Caco-2 (cell line): ENCODE measurements at regions of chr14 and their contacts with region 1.

Region 1: DNA sequence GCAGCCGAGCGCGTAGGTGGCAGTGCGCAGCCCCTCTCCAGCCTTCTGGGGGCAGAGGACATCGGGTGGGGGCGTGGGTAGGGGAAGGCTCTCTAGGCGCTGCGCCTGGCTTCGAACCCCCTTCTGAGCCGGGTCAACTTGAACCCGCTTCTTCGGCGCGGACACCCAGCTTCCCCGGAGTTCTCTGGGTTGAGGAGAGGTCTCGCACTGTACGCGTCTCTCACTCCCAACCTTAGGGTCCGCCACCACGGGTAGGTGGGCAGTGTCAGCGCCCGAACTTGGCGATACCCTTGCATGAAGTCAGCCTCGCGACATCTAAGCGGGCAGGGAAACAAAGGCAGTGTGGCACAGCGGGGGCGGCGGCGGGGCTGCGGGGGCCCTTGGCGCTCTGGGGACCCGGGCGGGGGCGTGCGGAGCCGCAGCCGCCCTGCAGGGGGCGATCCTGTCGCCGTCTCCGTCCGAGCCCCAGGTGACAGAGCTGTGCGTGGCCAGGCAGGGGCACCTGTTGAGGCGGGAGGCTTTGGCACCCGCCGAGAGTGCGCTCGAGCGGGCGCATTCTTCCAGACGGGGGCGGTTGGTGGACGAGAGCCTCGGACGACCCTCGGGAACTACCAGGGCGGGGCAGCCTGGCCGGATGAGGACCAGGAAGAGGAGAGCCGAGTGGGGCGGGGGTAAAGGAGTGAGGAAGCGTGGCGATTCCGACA is 1.1 kb downstream of the GALNT16 start:
- DNase-seq: peak; percentile 56 to 77
- H3K4me3 ChIP-seq: peak overlapping the region; percentile 81
- H3K4me3 Mint-ChIP-seq: peak overlapping the region; percentile 83
- H3K27ac Mint-ChIP-seq: peak overlapping the region; percentile 13
- H3K4me1 ChIP-seq: peaks cover 8% of the 10 kb centered on the region
- H3K4me1 Mint-ChIP-seq: peaks cover 11% of the 10 kb centered on the region
- H3K27me3 ChIP-seq: no peaks in the 10 kb centered on the region; the same call in 1 of the 2 replicates
- H3K27me3 Mint-ChIP-seq: peaks cover 3% of the 10 kb centered on the region
- CTCF ChIP-seq: peak; percentile 67 to 92

Region 2: DNA sequence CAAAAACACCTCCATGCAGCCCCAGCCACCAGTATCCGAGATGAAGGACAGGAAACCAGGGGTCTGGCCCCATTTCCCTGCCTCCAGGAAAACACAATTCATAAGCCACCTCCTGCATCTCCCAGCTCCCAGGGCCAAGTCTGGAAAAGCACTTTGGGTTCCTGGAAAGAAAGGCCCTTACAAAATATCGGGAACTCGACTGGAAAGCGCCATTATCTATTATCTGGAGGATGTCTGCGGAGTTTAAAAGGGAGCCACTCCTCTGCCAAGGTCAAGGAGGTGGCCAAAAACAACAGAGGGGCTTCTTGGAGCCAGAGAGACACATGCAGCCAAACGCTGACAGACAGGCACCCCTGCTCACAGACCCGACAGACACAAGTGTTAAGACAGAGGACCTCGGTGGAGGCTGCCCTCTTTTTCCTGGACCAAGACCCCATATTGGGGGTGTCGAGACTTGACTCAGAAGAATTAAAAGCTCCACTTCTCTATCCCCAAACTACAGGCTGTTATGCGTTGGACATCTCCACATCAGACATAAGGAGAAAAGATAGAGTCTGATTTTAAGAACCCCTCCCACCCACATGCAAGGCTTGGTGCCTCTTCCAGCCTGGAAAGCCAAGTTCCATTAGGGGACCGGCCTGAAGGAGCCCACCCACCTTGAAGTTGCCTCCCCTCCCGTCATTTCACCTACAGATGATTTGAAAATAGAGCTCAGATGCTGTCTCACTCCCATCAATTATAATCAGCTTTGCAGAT is 291.6 kb before region 1 on chr14:
- CTCF ChIA-PET with region 1: interaction called, 12 read pairs
- POLR2A ChIA-PET with region 1: no interaction called
- intact Hi-C with region 1: no loop called
- DNase-seq: no peak
- H3K4me3 ChIP-seq: no peak overlapping the region
- H3K4me3 Mint-ChIP-seq: no peak overlapping the region
- H3K27ac Mint-ChIP-seq: peak overlapping the region; percentile 46
- H3K4me1 ChIP-seq: peaks cover 58% of the 10 kb centered on the region
- H3K4me1 Mint-ChIP-seq: peaks cover 54% of the 10 kb centered on the region
- H3K27me3 ChIP-seq: no peaks in the 10 kb centered on the region
- H3K27me3 Mint-ChIP-seq: no peaks in the 10 kb centered on the region
- CTCF ChIP-seq: no peak

Region 3: GRCh38 chr14:69242311-69243224 is 18.4 kb before region 1 on chr14:
- CTCF ChIA-PET with region 1: interaction called, 12 read pairs
- POLR2A ChIA-PET with region 1: no interaction called
- intact Hi-C with region 1: loop called (anchors 1 kb)
- DNase-seq: peak; percentile 56 to 61
- H3K4me3 ChIP-seq: no peak overlapping the region
- H3K4me3 Mint-ChIP-seq: no peak overlapping the region
- H3K27ac Mint-ChIP-seq: no peak overlapping the region
- H3K4me1 ChIP-seq: peaks cover 8% of the 10 kb centered on the region; the same call in 1 of the 2 replicates
- H3K4me1 Mint-ChIP-seq: peaks cover 7% of the 10 kb centered on the region
- H3K27me3 ChIP-seq: no peaks in the 10 kb centered on the region
- H3K27me3 Mint-ChIP-seq: no peaks in the 10 kb centered on the region
- CTCF ChIP-seq: peak; percentile 69 to 78

Region 4: DNA sequence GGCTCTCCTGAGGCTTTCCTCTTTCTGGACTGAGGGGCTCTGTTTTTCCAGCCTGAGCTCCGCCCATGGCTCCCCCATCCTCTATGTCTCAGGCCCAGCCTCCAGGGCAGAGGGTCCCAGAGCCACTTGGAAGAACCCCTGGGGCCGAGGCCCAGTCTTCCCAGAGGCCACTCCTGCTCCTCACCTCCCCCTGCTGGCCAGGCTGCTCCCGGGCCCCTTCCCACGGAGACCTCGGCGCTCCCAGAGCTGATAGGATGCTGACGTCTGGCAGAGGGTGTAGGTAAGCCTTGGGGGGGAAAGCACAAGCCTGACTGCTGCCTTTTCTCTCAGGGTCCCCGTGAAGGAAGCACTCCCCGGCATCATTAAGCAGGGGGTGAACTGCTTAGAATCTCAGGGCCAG is 85.7 kb after region 1 on chr14:
- CTCF ChIA-PET with region 1: interaction called, 4 read pairs
- POLR2A ChIA-PET with region 1: no interaction called
- intact Hi-C with region 1: loop called (anchors 1 kb)
- DNase-seq: peak; percentile 55 to 68
- H3K4me3 ChIP-seq: no peak overlapping the region
- H3K4me3 Mint-ChIP-seq: no peak overlapping the region
- H3K27ac Mint-ChIP-seq: no peak overlapping the region
- H3K4me1 ChIP-seq: no peaks in the 10 kb centered on the region
- H3K4me1 Mint-ChIP-seq: peaks cover 17% of the 10 kb centered on the region
- H3K27me3 ChIP-seq: no peaks in the 10 kb centered on the region
- H3K27me3 Mint-ChIP-seq: no peaks in the 10 kb centered on the region
- CTCF ChIP-seq: peak; percentile 63 to 85

Region 5: DNA sequence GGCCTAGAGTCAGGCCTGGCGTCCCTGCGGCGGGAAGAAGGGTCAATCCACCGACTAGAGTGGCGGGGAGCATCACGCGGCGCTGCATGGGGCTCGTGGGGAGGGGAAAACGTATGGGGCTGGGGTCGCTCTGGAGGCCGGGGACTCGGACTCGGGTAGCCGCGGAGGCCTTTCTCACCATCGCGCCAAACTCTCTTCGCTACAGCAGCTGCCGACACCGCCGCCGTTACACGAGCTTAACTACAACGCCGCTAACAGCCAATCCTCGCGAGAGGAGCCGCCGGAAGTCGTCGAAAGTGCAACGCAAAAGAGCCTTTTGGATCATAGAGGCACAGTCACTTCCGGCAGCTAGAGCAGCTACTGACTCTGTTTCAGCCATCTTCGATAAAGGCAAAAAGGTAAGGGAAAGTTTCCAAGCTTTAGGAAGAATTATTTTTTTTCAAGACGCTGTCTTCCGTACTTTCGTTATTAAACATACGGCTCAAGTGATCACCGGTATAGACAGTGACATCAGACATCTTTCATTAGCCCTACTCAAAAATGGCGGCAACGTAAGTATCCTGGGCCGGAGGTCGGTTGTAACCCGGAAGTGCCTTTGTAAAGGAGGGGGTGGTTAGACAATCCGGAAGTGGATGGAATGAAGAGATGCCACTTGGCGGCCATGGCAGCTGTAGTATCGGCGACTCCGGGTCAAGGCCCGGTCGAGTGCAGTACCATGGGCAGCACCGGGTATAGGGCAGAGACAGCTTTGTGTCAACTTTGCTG is 137.2 kb after region 1 on chr14 and contains the starts of genes ERH and SLC39A9:
- CTCF ChIA-PET with region 1: interaction called, 3 read pairs
- POLR2A ChIA-PET with region 1: no interaction called
- intact Hi-C with region 1: loop called (anchors 1 kb)
- DNase-seq: peak; percentile 93 to 95
- H3K4me3 ChIP-seq: peak within 1 kb of the TSS; percentile 74
- H3K4me3 Mint-ChIP-seq: peak within 1 kb of the TSS; percentile 92
- H3K27ac Mint-ChIP-seq: peak within 1 kb of the TSS; percentile 98
- H3K4me1 ChIP-seq: peaks cover 3% of the 10 kb centered on the region; the same call in 1 of the 2 replicates
- H3K4me1 Mint-ChIP-seq: peaks cover 9% of the 10 kb centered on the region
- H3K27me3 ChIP-seq: no peaks in the 10 kb centered on the region
- H3K27me3 Mint-ChIP-seq: no peaks in the 10 kb centered on the region
- CTCF ChIP-seq: no peak
- total RNA-seq, gene ERH: 365 and 388 TPM in 2 replicates
- total RNA-seq, gene SLC39A9: 94.2 and 96.4 TPM in 2 replicates